BJ (cell line): ENCODE measurements at regions of chr7 and their contacts with region 1.

Region 1: GRCh38 chr7:5083311-5083711 is 37.7 kb downstream of the RBAK start:
- DNase-seq: no peak
- H3K4me3 ChIP-seq: no peak overlapping the region
- H3K27me3 ChIP-seq: no peaks in the 10 kb centered on the region
- CTCF ChIP-seq: no peak

Region 2: DNA sequence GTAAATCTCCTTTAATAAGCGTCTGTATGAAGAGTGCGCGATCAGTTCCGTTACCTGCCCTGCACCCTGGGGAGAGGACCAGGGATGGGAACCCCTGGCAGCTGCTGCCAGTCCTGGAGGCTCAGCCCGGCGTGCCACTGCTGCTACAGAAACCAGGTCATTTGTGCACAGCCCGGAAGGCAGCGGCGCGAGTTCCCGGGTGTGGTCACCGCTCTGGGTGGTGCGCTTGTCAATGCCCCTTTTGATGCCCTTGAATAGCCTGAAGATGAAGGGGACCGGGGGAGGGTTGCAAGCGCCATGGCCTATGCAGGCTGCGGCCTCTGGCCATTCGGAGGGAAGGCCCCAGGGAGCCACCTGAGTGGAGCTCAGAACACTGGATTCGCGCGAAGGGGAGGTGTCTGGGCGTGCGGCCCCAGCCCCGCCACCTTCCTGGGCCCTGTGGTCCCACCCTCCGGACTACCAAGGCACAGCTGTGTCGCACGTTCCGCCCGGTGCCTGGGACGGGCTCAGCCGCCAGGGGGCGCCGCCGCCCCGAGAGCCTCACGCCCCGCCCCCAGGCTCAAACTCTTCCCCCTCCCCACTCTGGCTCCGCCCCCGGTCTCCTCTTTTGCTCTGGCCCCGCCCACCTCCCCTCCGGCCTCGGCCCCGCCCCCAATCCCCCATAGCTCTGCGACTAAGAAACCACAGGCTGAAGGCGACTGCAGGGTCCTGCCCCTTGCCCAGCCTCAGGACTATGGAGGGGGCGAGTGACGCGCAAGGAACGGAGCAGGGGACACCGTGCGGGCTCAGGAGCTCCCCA is 291.4 kb before region 1 on chr7:
- CTCF ChIA-PET with region 1: interaction called, 51 read pairs
- POLR2A ChIA-PET with region 1: no interaction called
- DNase-seq: no peak
- H3K4me3 ChIP-seq: no peak overlapping the region
- H3K27me3 ChIP-seq: no peaks in the 10 kb centered on the region
- CTCF ChIP-seq: peak; percentile 68

Region 3: GRCh38 chr7:4797858-4798705 is 285.2 kb before region 1 on chr7:
- CTCF ChIA-PET with region 1: interaction called, 51 read pairs
- POLR2A ChIA-PET with region 1: no interaction called
- DNase-seq: no peak
- H3K4me3 ChIP-seq: no peak overlapping the region
- H3K27me3 ChIP-seq: no peaks in the 10 kb centered on the region
- CTCF ChIP-seq: peak; percentile 95

Region 4: DNA sequence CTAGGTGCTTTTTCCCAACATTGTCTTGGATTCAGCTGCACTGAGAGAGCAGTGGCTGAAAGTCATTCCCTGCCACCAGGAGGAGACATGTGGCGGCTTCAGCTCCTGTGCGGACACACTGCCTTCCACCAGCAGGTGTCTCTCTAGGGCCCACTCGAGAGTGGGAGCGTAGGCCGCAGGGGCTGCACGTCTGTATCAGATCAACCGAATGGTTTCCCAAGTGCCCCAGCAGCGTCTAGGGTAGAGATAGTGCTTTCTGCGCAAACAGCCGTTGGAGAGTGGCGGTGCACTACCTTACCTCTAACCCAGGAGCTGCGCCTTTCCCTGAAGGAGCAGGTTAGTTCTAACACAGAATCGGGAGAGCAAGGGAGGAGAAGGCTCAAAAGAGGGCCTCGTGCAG is 253.1 kb before region 1 on chr7:
- CTCF ChIA-PET with region 1: interaction called, 10 read pairs
- POLR2A ChIA-PET with region 1: no interaction called
- DNase-seq: no peak
- H3K4me3 ChIP-seq: no peak overlapping the region
- H3K27me3 ChIP-seq: no peaks in the 10 kb centered on the region
- CTCF ChIP-seq: peak; percentile 83

Region 5: DNA sequence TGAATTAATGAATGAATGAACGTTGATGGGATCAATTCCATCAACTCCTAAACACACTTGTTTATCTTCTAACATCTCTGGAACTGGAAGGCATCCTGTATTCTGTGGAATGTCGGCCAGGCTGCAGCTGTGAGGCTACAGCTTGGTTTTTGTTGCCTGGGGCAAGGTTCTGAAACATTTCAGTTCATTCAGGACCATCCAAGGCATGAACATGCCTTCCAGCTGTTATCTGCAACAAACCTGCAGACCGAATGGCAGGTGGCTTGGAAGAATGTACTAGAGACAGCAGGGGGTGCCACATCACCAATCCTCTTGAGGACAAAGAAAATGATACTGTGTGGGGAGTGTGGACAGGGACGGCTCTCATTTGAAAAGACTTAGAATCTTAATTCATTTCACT is 233.9 kb before region 1 on chr7:
- CTCF ChIA-PET with region 1: interaction called, 12 read pairs
- POLR2A ChIA-PET with region 1: no interaction called
- DNase-seq: peak; percentile 17
- H3K4me3 ChIP-seq: no peak overlapping the region
- H3K27me3 ChIP-seq: no peaks in the 10 kb centered on the region
- CTCF ChIP-seq: peak; percentile 46

Region 6: DNA sequence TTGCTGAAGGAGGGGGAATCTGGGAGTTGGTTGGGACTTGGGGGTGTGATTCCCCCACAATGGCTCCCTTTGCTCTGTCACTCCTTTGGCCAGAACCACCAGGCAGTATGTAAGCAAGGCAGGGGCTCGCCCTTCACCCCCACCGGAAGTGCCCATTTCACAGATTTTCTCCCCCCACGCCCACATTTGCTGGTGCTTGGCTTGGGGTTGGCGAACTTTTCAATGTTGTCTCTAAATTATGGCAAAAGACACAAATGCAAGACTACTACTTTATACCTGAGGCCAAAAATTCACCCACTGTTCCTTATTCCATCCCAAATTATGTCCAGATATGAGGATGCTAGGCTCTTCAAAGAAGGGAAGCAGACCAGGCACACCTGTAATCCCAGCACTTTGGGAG is 13.1 kb before region 1 on chr7:
- CTCF ChIA-PET with region 1: no interaction called
- POLR2A ChIA-PET with region 1: no interaction called
- DNase-seq: no peak
- H3K4me3 ChIP-seq: no peak overlapping the region
- H3K27me3 ChIP-seq: no peaks in the 10 kb centered on the region
- CTCF ChIP-seq: no peak

Region 7: DNA sequence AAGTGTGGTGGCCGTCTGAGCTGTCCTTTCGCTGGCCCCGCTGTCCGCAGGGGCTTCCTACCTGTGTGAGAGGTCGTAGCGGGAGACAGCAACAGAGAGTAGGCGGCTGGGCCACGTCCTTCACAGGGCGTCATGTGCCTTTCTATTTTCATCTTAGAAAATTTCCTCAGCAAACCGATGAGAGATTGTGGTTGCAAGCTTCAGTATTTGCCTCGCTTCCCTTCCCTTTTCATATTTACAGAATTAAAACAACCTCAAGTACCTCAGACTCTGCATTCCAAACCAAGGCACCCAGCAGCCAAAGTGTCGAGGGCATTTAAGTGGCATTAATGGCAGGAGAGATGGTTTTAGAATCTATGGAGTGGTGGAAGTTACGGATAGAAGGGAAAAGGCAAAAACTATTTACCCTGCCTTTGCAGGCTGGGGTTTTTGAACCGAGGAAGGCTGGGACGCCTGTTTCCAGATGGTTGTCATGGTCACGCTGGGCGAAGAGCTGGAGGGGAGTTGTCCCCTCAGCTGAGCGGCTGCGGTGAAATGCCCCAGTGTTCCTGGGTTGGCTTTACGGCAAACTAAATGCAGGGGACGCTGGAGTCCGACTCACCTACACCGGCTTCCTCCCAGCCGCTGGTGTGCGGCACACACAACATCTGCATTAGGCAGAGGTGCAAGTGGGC is 148.6 kb after region 1 on chr7:
- CTCF ChIA-PET with region 1: no interaction called
- POLR2A ChIA-PET with region 1: no interaction called
- DNase-seq: no peak
- H3K4me3 ChIP-seq: no peak overlapping the region
- H3K27me3 ChIP-seq: no peaks in the 10 kb centered on the region
- CTCF ChIP-seq: no peak